AG04449 (cell line): ENCODE measurements at regions of chr2 and their contacts with region 1.

Region 1: DNA sequence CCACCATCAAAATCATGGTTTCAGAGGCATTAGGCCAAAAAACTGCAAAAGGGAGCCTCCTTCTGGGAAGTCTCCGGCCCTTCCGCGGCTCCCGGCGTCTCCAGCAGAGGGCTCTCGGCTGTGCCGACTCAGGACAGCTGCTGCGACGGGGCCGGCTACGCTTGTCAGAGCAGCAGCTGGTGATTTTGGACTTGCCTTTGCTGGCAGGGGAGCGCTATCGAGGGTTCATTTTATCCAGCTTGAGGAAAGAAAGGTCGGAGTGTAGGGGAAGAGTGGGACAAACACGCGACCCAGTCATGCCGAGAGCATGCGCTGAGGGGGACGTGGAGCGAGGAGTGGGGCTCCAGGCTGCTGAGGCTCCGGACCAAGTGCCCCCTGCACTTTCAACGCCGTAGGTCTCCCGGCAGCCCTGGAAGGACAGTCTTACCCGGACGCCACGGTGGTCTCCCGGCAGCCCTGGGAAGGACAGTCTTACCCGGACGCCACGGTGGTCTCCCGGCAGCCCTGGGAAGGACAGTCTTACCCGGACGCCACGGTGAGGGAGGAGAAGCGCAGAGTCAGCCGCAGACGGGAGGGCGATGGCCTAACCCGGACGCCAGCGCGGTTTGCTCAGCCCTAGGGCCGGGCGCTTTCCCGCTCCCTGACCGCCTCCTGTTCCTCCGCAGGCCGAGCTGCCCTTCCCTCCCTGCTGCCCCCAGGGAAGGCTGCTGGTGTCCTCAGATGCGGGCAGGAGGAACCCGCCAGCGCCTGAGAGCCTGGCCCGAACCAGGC is 21.7 kb downstream of the DDX18 start:
- DNase-seq: peak; percentile 29
- H3K4me3 ChIP-seq: peak overlapping the region; percentile 55
- CTCF ChIP-seq: peak; percentile 97

Region 2: DNA sequence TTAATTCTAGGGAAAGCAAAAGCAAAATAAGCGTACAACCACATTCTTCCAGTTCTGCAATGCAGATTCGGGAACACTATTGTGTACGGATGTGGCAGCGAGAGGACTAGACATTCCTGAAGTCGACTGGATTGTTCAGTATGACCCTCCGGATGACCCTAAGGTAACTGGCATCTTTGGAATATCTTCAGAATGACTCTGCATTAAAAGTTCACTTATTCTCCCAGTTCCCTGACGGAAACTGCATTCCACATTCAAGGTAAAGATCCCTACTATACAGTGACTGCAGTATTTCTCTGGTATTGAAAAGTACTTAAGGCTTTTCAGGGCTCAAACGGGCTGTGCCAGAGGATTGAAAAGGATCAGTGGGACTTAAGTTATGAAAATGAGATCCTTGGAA is 10.7 kb before region 1 on chr2:
- CTCF ChIA-PET with region 1: interaction called, 18 read pairs
- POLR2A ChIA-PET with region 1: no interaction called
- DNase-seq: no peak
- H3K4me3 ChIP-seq: no peak overlapping the region
- CTCF ChIP-seq: no peak

Region 3: GRCh38 chr2:117856415-117857210 is 20.4 kb after region 1 on chr2:
- CTCF ChIA-PET with region 1: interaction called, 10 read pairs
- POLR2A ChIA-PET with region 1: interaction called, 3 read pairs
- DNase-seq: peak; percentile 90
- H3K4me3 ChIP-seq: no peak overlapping the region
- CTCF ChIP-seq: no peak

Region 4: GRCh38 chr2:117943013-117943672 is 107.0 kb after region 1 on chr2:
- CTCF ChIA-PET with region 1: interaction called, 11 read pairs
- POLR2A ChIA-PET with region 1: no interaction called
- DNase-seq: peak; percentile 79
- H3K4me3 ChIP-seq: no peak overlapping the region
- CTCF ChIP-seq: no peak

Region 5: DNA sequence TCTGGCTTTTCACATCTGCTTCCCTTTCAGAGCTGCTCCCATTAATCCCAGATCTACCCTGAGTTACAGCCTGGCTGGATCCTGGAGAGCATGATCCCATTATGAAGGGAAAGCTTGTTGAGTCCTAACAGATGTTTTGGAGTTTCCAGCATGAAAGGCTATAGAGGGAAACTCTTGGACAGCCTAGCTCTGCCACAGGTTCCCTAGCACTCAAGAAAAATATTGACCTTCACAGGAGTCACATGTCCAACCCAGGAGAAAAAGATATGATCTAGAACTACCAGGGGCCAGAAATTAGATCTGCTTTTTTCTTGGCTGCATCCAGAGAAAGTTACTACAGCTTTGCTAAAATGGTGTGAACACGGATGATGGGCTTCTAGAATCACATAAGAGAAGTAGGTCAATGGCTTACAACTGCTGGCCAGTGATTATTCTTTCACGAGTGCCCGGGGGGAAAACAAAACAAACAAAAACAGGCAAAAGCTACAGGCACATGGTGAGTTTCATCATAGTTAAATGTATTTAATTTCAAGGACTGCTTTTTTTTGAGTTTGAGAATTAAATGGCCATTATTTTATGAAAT is 161.8 kb after region 1 on chr2:
- CTCF ChIA-PET with region 1: interaction called, 519 read pairs
- POLR2A ChIA-PET with region 1: interaction called, 7 read pairs
- DNase-seq: no peak
- H3K4me3 ChIP-seq: no peak overlapping the region
- CTCF ChIP-seq: no peak

Region 6: GRCh38 chr2:118112771-118113334 is 276.7 kb after region 1 on chr2:
- CTCF ChIA-PET with region 1: no interaction called
- POLR2A ChIA-PET with region 1: no interaction called
- DNase-seq: peak; percentile 55
- H3K4me3 ChIP-seq: no peak overlapping the region
- CTCF ChIP-seq: no peak